ENCODE measurements at regions of chr5 and their contacts with region 1.

Region 1: DNA sequence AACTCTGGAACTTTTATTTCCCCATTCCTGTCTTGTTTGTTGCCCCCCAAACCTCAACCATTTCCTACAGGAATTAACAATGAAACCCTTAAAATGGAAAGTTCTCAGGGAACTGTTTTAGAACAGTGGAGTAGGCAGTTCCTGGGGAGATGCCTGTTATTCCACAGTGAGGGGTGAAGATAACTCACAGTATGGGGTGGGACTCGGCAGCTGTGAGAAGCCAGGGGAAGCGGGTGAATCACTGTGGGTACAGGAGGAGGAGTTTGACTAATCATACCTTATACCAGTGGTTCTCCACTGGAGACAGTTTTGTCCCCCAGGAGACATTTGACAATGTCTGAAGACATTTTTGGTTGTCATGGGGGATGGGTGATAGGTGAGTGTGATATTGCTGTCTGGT is 36.9 kb upstream of the GLRA1 start:
- DNase-seq: no peak
- H3K4me3 ChIP-seq: no peak overlapping the region
- CTCF ChIP-seq: no peak
- POLR2A ChIP-seq: no peak

Region 2: GRCh38 chr5:151862811-151863472 is 98.6 kb before region 1 on chr5:
- intact Hi-C with region 1: no loop called
- DNase-seq: no peak
- H3K4me3 ChIP-seq: no peak overlapping the region
- CTCF ChIP-seq: no peak
- POLR2A ChIP-seq: no peak

Region 3: GRCh38 chr5:151947925-151948608 is 13.5 kb before region 1 on chr5:
- intact Hi-C with region 1: no loop called
- DNase-seq: no peak
- H3K4me3 ChIP-seq: no peak overlapping the region
- CTCF ChIP-seq: no peak
- POLR2A ChIP-seq: no peak

Region 4: GRCh38 chr5:152349683-152350526 is 388.3 kb after region 1 on chr5:
- intact Hi-C with region 1: loop called (anchors 5 kb)
- DNase-seq: no peak
- H3K4me3 ChIP-seq: no peak overlapping the region
- CTCF ChIP-seq: no peak
- POLR2A ChIP-seq: no peak

Region 5: GRCh38 chr5:152422081-152422480 is 460.5 kb after region 1 on chr5:
- intact Hi-C with region 1: no loop called
- DNase-seq: no peak
- H3K4me3 ChIP-seq: no peak overlapping the region
- CTCF ChIP-seq: no peak
- POLR2A ChIP-seq: no peak